ENCODE measurements at regions of chr12 and their contacts with region 1.

Region 1: DNA sequence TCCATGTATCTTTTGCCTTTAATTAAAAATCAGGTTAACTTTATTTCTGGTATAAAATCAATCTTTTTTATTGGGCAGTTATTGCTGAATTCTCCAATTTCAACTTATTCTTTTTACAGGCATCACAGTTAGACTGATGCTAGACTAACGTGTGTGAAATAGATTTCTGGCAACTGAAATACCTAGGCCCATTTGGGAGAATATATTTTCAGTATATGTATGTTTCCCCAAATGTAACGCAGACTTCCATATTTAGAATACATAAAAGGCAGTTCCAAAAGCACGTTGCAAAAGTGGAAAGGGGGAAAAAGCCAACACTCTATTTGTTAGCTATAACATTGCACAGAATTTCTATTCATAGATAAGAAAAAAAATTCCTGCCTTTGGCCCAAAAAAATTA is 297.0 kb downstream of the ATP23 start:
- DNase-seq: no peak
- ATAC-seq: no peak
- H3K4me3 ChIP-seq: no peak overlapping the region
- H3K27ac ChIP-seq: no peak overlapping the region
- H3K4me1 ChIP-seq: peaks cover 0 to 6% (median 0%) of the 10 kb centered on the region in 9 donors
- H3K27me3 ChIP-seq: peaks cover 0 to 4% (median 0%) of the 10 kb centered on the region in 7 donors
- CTCF ChIP-seq: no peak

Region 2: DNA sequence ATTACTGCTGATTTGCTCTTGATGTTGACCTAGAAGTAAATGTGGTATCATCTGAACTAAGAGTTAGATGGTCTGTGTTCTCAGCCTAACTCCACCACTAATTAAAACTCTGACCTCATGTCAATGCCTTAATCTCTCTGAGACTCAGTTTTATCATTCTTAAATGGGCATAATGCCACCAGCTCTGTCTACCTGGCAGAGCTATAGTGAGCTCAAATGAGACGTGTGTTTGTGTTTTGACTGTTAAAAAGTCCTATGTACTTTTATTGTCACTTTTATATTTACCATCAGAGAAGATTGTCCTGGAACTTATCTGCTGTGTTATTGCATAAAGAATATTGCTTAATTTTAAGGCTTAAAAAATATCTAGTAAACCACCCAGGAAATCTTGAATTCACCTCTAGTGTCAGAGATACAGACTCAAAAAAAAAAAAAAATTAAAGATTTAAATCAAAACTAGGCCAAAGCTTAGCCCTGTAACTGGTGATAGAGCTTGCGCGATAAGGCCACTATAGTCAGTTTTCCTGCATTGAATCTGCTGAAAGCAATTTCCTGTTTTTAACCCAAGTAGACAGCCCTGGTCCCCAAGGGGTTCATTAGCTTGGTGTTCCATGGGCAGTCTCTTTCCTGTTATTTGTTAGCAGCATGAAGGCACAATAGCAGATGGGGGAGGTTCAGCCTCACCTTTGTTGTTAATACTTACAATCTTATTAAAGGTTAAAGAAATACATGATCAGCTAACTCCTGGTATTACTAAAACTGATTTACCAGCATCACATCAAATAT is 35.3 kb before region 1 on chr12:
- intact Hi-C with region 1: loop called in 1 of 10 experiments (anchors 5 kb)
- DNase-seq: peak in 1 of 2 donors; percentile 42
- ATAC-seq: peak in 7 of 8 donors; percentile 74 to 88 (median 84)
- H3K4me3 ChIP-seq: no peak overlapping the region
- H3K27ac ChIP-seq: peak overlapping the region; percentile 27 to 86 (median 64)
- H3K4me1 ChIP-seq: peaks cover 0 to 32% (median 16%) of the 10 kb centered on the region in 9 donors
- H3K27me3 ChIP-seq: no peaks in the 10 kb centered on the region
- CTCF ChIP-seq: no peak

Measured in heart right ventricle (tissue), 16 donors.